Tibial artery (tissue), 4 donors: ENCODE measurements at regions of chr5 and their contacts with region 1.

Region 1: GRCh38 chr5:126422989-126423788 is at the start of gene GRAMD2B:
- DNase-seq: peak; percentile 88 to 94
- H3K4me3 ChIP-seq: peak within 1 kb of the TSS; percentile 54 to 60
- H3K27ac ChIP-seq: peak within 1 kb of the TSS; percentile 75 to 85
- H3K4me1 ChIP-seq: peaks cover 0 to 44% (median 14%) of the 10 kb centered on the region in 4 donors
- H3K27me3 ChIP-seq: no peaks in the 10 kb centered on the region
- CTCF ChIP-seq: no peak

Region 2: DNA sequence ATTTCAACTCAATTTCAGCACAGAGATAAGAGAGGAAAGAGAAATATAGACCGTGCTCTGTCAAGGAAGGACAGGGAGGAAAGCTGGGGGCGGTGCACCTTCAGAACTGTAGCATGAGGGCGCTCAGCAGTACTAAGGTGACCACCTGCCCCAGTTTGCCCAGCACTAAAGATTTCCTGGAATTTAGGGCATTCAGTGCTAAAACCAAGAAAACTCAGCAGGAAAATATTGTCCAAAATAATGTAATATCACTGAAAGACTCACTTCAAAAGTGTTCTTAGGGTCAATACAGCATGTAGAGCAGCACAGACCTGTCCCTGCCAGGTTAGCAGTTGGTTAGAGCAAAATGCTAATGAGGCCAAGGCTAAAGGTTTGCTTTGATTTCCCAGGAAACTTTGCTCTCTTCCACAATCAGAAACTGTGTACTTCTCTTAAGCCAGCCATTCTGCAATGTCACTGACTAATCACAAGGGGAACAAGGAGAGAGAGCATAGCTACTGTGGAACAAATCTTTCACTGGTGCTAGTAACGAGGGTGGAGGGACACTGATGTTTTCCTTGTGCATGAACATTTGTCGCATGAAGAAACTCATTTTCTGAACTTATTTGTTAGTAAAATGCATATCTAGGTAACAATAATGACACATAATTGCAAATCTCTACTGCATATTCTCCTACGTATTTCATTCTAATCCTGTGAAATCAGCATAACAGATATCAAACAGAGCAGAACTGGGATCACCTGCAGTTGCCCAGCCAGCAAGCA is 53.0 kb before region 1 on chr5:
- intact Hi-C with region 1: loop called (anchors 10 kb)
- DNase-seq: no peak
- H3K4me3 ChIP-seq: no peak overlapping the region
- H3K27ac ChIP-seq: no peak overlapping the region
- H3K4me1 ChIP-seq: peaks cover 0 to 5% (median 2%) of the 10 kb centered on the region in 4 donors
- H3K27me3 ChIP-seq: no peaks in the 10 kb centered on the region
- CTCF ChIP-seq: peak; percentile 20 to 36